Adrenal gland (tissue), 19 donors: ENCODE measurements at regions of chr9 and their contacts with region 1.

Region 1: GRCh38 chr9:112939418-112939817 is 48.7 kb upstream of the SLC46A2 start:
- DNase-seq: no peak
- H3K4me3 ChIP-seq: no peak overlapping the region
- H3K27ac ChIP-seq: no peak overlapping the region
- H3K4me1 ChIP-seq: no peaks in the 10 kb centered on the region
- H3K27me3 ChIP-seq: no peaks in the 10 kb centered on the region
- CTCF ChIP-seq: no peak
- POLR2A ChIP-seq: no peak

Region 2: DNA sequence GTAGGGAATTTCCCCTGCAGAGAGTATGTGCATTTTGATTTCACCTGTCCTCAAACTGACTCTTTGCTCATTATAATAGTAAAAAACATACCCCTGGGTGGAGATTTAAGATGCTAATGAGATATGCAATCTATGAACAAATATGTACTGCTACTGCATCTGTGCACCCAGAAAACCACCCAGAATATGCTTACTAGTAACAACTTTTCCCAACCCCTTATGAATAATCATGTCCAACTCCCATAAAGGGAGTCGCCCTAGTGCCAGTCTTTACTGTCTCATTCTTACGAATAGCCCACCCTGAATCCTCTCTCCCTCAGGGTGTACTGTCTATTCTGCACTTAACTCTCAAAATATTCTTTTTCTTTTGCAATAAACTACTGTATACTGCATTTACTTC is 156.1 kb after region 1 on chr9:
- intact Hi-C with region 1: loop called in 1 of 2 experiments (anchors 10 kb)
- DNase-seq: no peak
- H3K4me3 ChIP-seq: no peak overlapping the region
- H3K27ac ChIP-seq: no peak overlapping the region
- H3K4me1 ChIP-seq: no peaks in the 10 kb centered on the region
- H3K27me3 ChIP-seq: peaks cover 8% of the 10 kb centered on the region
- CTCF ChIP-seq: no peak
- POLR2A ChIP-seq: no peak